ENCODE measurements at regions of chr6 and their contacts with region 1.

Region 1: GRCh38 chr6:37432916-37433656 is at the start of gene CMTR1:
- DNase-seq: peak; percentile 95 to 99 (median 97)
- ATAC-seq: peak; percentile 97 to 99 (median 99)
- H3K4me3 ChIP-seq: peak within 1 kb of the TSS; percentile 76 to 100 (median 96)
- H3K27ac ChIP-seq: peak within 1 kb of the TSS; percentile 82 to 97 (median 94)
- H3K4me1 ChIP-seq: peaks cover 0 to 23% (median 17%) of the 10 kb centered on the region in 12 donors
- H3K27me3 ChIP-seq: no peaks in the 10 kb centered on the region
- CTCF ChIP-seq: peak in 1 of 12 donors; percentile 15
- POLR2A ChIP-seq: peak in 1 of 2 donors; percentile 65
- total RNA-seq, gene CMTR1: 23.1 to 40.7 (median 31.9) TPM

Region 2: GRCh38 chr6:36985808-36986703 is 447.0 kb before region 1 on chr6 and contains the start of gene MTCH1:
- intact Hi-C with region 1: loop called in 1 of 10 experiments (anchors 5 kb)
- DNase-seq: peak; percentile 93 to 95 (median 94)
- ATAC-seq: peak; percentile 91 to 96 (median 94)
- H3K4me3 ChIP-seq: peak within 1 kb of the TSS; percentile 91 to 100 (median 98)
- H3K27ac ChIP-seq: peak within 1 kb of the TSS; percentile 89 to 100 (median 98)
- H3K4me1 ChIP-seq: peaks cover 8 to 51% (median 46%) of the 10 kb centered on the region in 12 donors
- H3K27me3 ChIP-seq: no peaks in the 10 kb centered on the region
- CTCF ChIP-seq: peak in 1 of 12 donors; percentile 16
- POLR2A ChIP-seq: peak; percentile 68 to 96
- total RNA-seq, gene MTCH1: 144 to 320 (median 193) TPM

Region 3: DNA sequence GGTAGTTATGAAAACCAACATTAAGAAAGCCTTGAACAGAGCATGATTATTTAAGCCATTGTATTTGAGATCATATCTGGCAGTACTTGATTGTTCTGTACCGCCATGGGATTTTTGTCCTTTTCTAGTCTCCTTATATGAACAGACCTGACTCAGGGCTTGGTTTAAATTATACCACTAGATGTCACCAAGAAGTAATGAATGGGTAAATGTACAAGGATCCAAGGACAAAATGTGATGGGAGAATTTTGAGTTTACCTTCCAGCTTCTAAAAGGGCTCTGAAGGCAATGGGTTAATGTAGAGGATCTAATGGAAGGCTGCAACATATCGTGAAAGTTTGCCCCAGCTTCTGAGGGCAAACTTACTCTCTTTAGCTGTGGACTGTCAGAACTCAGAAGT is 67.3 kb before region 1 on chr6:
- intact Hi-C with region 1: loop called in 1 of 10 experiments (anchors 5 kb)
- DNase-seq: no peak
- ATAC-seq: peak; percentile 48 to 62 (median 56)
- H3K4me3 ChIP-seq: no peak overlapping the region
- H3K27ac ChIP-seq: no peak overlapping the region
- H3K4me1 ChIP-seq: peaks cover 0 to 40% (median 26%) of the 10 kb centered on the region in 12 donors
- H3K27me3 ChIP-seq: no peaks in the 10 kb centered on the region
- CTCF ChIP-seq: peak in 9 of 12 donors; percentile 17 to 53 (median 41)
- POLR2A ChIP-seq: no peak

Region 4: GRCh38 chr6:37499433-37500293 is 66.6 kb after region 1 on chr6 and contains the start of gene CCDC167:
- intact Hi-C with region 1: loop called in 1 of 10 experiments (anchors 5 kb)
- DNase-seq: peak; percentile 93 to 97 (median 96)
- ATAC-seq: peak; percentile 98 to 99 (median 99)
- H3K4me3 ChIP-seq: peak within 1 kb of the TSS; percentile 32 to 77 (median 68)
- H3K27ac ChIP-seq: peak within 1 kb of the TSS in 7 of 12 donors; percentile 21 to 66 (median 53)
- H3K4me1 ChIP-seq: peaks cover 0 to 28% (median 6%) of the 10 kb centered on the region in 12 donors
- H3K27me3 ChIP-seq: no peaks in the 10 kb centered on the region
- CTCF ChIP-seq: no peak
- POLR2A ChIP-seq: peak in 1 of 2 donors; percentile 19
- total RNA-seq, gene CCDC167: 17.6 to 53.7 (median 25.2) TPM

Region 5: DNA sequence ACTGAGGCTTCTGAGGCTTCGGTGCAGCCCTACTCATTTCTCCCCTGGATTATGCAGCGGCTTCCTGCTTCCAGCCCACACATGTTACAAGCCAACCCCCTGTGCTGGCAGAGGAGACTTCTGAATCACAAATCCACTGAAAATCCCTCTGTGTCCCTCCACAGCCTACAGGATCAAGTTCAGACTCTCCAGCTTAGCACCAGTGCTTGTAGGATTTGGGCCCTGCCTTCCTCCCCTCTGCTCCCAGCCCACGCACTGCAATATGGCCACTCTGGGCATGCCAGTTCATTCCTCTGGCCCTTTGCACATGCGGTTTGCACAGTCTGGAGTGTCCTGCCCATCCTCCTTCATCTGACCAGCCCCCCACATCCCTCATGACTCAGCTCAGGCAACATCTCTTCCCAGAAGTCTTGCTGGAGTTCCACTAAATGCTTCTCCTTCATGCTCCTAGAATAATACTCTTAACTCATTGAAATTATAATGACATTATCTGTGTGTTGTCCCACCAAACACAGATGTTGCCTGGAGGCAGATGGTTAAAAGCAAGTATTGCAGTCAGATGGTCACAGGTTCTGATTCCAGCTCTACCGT is 280.5 kb after region 1 on chr6:
- intact Hi-C with region 1: no loop called
- DNase-seq: peak in 1 of 5 donors; percentile 37
- ATAC-seq: peak in 2 of 4 donors; percentile 19 to 66
- H3K4me3 ChIP-seq: no peak overlapping the region
- H3K27ac ChIP-seq: peak overlapping the region in 1 of 12 donors; percentile 46
- H3K4me1 ChIP-seq: peaks cover 0 to 9% (median 0%) of the 10 kb centered on the region in 12 donors
- H3K27me3 ChIP-seq: no peaks in the 10 kb centered on the region
- CTCF ChIP-seq: no peak
- POLR2A ChIP-seq: no peak